Right ventricle myocardium inferior (tissue), 1 donor: ENCODE measurements at regions of chr7 and their contacts with region 1.

Region 1: GRCh38 chr7:138459413-138460175 is 465 bp upstream of the TRIM24 start:
- DNase-seq: peak; percentile 99
- ATAC-seq: peak; percentile 98

Region 2: GRCh38 chr7:138338361-138338760 is 121.2 kb before region 1 on chr7:
- intact Hi-C with region 1: loop called (anchors 5 kb)
- DNase-seq: no peak
- ATAC-seq: no peak

Region 3: DNA sequence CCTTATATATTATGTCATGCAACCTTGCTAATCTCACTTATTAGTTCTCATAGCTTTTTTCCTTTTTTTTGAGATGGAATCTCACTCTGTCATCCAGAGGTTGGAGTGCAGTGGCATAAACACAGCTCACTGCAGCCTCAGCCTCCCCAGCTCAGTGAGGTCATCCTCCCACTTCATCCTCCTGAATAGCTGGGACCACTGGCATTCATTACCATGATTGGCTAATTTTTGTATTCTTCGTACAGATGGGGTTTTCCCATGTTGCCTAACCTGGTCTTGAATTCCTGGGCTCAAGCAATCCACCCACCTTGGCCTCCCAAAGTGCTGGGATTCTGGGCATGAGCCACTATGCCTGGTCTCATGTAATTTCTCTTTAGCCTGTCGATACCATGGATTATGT is 88.6 kb before region 1 on chr7:
- intact Hi-C with region 1: no loop called
- DNase-seq: no peak
- ATAC-seq: no peak

Region 4: DNA sequence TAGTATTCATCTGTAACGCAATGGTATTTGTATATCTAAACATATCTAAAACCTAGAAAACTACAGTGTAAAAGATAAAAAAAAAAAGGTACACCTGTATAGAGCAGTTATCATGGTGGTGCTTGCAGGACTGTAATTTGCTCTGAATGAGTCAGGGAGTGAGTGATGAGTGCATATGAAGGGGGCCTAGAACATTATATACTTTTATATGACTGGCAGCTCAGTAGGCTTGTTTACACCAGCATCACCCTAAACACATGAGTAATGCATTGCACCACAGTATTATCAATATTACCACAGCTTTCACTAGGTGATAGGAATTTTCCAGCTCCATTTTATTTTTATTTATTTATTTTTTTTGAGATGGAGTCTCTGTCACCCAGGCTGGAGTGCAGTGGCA is 41.3 kb after region 1 on chr7:
- intact Hi-C with region 1: no loop called
- DNase-seq: no peak
- ATAC-seq: no peak

Region 5: DNA sequence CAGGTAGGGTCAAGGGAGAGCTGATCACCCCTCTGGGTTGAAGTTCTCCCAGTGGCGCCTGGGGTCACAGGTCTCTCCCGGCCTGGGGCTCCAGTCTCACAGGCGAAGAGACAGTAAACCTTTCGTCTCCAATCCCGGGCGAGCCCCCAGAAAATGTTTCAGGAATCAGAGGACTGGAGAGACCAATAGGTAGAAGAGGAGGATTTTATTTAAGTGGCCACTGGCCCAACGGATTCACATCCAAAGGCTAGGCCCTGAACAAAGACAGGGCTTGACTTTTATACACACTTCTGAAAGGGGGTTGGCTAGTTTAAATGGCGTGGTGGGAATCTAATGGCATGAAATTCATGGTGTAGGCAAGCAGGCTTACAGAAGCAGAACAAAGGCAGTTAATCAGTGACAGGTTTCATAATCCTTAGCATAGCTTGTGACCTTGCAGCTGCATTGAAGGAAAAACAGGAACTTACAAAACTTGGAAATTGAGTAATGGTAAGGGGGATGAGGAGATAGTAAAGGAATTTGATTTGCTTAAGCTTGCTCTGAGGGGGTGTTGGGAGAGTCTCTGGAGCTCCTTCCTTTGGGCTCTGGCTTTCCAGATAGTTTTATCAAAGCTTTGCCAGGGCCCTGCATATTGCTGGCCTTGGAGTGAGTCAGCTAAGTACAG is 106.0 kb after region 1 on chr7:
- intact Hi-C with region 1: loop called (anchors 10 kb)
- DNase-seq: no peak
- ATAC-seq: no peak